Ascending aorta (tissue), 2 donors: ENCODE measurements at regions of chr9 and their contacts with region 1.

Region 1: DNA sequence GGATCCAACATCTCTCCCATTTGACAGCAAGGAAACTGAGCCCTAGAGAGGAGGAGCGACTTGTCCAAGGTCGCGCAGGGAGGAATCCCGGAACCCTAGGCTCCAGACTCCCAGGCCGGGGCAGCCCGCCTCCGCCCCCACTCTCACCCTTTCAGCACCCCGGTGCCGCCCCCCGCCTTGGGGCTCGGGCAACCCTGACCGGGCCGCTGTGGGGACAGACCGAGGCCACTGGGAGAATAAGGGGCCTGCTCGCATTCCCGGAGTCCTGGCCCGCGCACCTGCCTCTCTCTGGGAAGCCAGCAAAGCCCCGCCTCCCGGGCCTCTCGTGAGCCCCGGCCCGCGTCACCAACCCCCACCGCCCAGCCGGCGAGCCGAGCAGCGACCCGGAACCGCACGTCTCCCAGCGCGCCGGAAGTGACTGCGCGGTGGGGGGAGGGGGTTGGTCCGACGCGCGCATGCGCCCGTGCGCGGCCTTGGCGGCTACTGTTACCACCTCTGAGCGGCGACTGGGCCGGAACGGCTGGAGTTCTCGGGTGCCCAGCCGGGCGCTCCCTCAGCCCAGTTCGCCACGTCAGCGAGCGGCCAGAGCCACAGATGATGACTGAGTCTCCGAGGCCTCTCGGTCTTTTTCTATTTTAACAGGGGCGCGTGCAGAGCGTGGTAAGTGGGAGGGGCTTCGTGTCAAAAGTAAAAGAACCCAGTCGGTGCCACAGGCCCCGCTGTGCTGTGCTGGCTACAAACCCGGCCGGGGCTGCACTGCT is at the start of gene GOLGA1:
- DNase-seq: peak; percentile 80 to 98
- H3K4me3 ChIP-seq: peak within 1 kb of the TSS; percentile 68 to 91
- H3K27ac ChIP-seq: peak within 1 kb of the TSS; percentile 92 to 94
- H3K4me1 ChIP-seq: peaks cover 6 to 8% of the 10 kb centered on the region in 2 donors
- H3K27me3 ChIP-seq: no peaks in the 10 kb centered on the region
- CTCF ChIP-seq: no peak
- total RNA-seq, gene GOLGA1: 36.8 TPM

Region 2: DNA sequence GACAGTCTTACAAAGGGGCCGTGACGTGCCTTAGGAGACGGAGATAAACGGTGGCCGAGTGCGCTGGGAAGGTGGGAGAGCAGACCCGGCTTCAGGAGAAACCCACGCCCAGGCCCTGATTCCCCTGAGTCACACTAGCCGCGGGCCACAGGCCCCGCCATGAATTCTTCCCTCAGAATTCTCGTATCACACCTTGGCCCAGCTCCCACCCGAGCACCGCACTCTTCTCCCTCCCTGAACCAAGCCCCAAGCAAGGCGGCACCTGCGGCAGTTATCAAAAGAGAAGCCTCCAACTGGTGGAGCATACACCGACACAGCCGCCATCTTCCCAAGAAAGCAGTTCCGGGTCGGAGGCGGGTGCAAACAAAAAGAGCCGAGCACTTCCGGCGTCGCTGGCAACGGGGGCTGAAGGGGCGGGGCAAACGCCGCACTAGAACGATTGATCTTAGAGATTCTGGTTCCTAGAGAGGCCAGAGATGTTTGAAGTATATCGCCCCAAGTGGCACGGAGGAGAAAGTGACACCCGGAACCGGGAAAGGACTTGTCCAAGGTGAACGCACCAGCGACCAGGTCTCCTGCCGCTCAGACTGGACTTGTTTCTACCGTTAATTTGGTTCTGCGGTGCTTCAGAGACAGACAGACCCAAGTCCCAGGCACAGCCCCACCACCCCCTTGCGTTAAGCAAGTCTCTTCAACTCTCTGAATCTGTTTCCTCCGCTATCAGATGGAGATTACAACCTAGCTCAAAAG is 525.6 kb before region 1 on chr9 and contains the start of gene PSMB7:
- intact Hi-C with region 1: loop called (anchors 10 kb)
- DNase-seq: peak; percentile 80 to 97
- H3K4me3 ChIP-seq: peak within 1 kb of the TSS; percentile 78 to 93
- H3K27ac ChIP-seq: peak within 1 kb of the TSS in 1 of 2 donors; percentile 44
- H3K4me1 ChIP-seq: peaks cover 4 to 10% of the 10 kb centered on the region in 2 donors
- H3K27me3 ChIP-seq: no peaks in the 10 kb centered on the region
- CTCF ChIP-seq: peak; percentile 79 to 87 (median 84)
- total RNA-seq, gene PSMB7: 21.1 TPM

Region 3: DNA sequence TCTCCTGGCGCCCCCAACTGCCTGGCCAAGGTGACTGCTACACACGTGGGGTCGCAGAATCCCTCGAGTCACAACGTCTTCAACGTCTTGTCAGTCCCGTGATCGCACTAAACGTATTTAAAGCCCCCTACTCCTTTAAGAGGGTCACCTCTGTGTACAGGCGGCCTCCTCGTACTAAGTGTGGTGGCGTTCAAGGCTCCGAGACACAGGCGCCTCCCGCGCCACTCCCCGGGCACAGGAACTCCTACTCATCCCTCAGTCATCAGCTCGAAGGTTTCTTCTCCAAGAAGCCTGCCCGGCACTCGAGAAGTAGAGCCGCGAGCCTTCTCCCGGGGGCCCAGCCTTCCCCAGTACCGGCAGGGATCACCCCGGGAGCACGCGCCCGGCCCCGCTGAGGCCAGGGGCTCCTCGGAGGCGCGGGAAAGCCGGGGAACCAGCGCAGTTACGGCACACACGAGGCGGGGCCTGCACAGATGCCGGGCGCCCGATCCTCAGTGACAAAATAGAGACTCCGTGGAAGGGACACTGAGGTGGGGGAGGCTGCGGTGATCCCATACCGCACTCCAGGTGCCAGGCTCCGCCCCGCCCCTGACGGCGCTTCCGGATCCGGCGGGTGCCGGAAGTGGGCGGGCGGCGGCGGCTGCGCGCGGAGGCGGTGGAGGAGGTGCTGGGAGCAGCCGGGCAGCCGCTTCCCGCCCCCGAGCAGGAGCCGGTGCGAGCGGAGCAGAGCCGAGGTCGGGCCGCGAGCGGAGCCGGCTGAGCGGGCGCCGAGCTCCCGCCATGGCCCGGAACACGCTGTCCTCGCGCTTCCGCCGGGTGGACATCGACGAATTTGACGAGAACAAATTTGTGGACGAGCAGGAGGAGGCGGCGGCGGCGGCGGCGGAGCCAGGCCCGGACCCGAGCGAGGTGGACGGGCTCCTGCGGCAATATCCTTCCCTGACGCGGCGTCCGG is 72.1 kb before region 1 on chr9:
- intact Hi-C with region 1: loop called (anchors 2 kb)
- DNase-seq: peak; percentile 30 to 92
- H3K4me3 ChIP-seq: peak overlapping the region; percentile 63 to 84
- H3K27ac ChIP-seq: peak overlapping the region; percentile 89 to 96
- H3K4me1 ChIP-seq: peaks cover 8 to 31% of the 10 kb centered on the region in 2 donors
- H3K27me3 ChIP-seq: no peaks in the 10 kb centered on the region
- CTCF ChIP-seq: no peak

Region 4: DNA sequence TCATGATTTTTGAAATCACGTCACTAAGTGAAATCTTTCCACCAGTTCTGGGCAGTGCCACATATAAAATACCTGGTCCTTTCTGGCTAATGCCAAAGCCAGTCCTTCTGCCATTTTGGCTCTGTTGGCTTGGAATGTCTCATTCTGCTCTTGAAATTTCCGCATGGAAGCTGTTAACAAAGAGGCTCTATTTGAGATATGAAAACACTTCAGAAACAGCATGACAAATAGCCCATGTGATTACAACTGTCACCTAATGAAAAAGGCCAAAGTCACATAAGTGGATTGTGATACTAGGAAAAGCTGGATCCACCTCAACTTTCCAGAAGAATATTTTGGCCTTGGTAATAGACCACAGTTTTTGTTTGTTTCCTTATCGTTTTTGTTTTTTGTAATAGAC is 12.8 kb before region 1 on chr9:
- intact Hi-C with region 1: no loop called
- DNase-seq: no peak
- H3K4me3 ChIP-seq: no peak overlapping the region
- H3K27ac ChIP-seq: no peak overlapping the region
- H3K4me1 ChIP-seq: no peaks in the 10 kb centered on the region
- H3K27me3 ChIP-seq: no peaks in the 10 kb centered on the region
- CTCF ChIP-seq: no peak

Region 5: GRCh38 chr9:125189361-125190289 is 248.8 kb after region 1 on chr9 and contains the start of gene PPP6C:
- intact Hi-C with region 1: loop called (anchors 1 kb)
- DNase-seq: peak; percentile 80 to 98
- H3K4me3 ChIP-seq: peak within 1 kb of the TSS; percentile 84 to 99
- H3K27ac ChIP-seq: peak within 1 kb of the TSS; percentile 98 to 99
- H3K4me1 ChIP-seq: peaks cover 9 to 44% of the 10 kb centered on the region in 2 donors
- H3K27me3 ChIP-seq: no peaks in the 10 kb centered on the region
- CTCF ChIP-seq: peak; percentile 53 to 68 (median 60)
- total RNA-seq, gene PPP6C: 33.8 TPM

Region 6: DNA sequence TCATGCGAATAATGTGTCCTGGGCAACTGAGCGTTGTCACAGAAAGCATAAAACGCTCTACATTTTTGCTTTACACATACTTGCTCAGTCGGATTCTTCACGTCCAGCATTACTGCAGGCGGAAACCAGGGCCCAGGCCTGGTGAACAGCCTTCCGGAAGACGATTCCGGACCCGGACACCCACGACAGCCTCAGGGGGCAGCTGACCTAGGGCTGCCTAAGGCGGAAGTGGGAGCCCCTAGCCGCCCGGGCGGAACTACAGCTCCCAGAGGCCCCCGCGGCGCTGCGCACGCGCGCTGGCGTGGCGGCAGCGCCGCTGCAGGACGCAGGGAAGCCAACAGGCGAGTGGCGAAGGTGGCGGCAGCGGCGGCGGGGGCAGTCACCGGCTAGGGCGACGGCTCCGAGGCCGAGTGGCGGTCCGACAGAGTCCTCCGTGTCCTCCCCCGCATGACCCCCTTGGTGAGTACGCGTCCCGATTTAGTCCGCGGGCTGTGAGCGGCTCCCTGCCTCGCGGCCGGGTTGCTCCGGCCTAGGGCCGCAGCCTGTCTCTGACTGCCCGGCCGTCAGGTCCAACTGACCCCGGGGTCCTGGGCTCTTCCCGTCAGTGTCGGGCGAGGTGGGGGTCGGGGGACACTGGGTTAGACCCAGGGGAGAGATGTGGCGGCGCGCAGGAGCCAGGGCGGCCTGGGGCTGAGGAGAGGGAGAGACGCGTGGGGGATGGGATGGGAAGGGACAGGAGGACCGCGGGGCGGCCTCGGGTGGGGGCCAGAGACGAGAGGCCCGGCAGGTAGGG is 320.8 kb after region 1 on chr9 and contains the start of gene GAPVD1:
- intact Hi-C with region 1: loop called (anchors 5 kb)
- DNase-seq: peak; percentile 43 to 94
- H3K4me3 ChIP-seq: peak within 1 kb of the TSS; percentile 94 to 99
- H3K27ac ChIP-seq: peak within 1 kb of the TSS; percentile 75 to 78
- H3K4me1 ChIP-seq: peaks cover 0 to 17% of the 10 kb centered on the region in 2 donors
- H3K27me3 ChIP-seq: no peaks in the 10 kb centered on the region
- CTCF ChIP-seq: peak in 2 of 3 experiments; percentile 34 to 45
- total RNA-seq, gene GAPVD1: 18.9 TPM

Region 7: DNA sequence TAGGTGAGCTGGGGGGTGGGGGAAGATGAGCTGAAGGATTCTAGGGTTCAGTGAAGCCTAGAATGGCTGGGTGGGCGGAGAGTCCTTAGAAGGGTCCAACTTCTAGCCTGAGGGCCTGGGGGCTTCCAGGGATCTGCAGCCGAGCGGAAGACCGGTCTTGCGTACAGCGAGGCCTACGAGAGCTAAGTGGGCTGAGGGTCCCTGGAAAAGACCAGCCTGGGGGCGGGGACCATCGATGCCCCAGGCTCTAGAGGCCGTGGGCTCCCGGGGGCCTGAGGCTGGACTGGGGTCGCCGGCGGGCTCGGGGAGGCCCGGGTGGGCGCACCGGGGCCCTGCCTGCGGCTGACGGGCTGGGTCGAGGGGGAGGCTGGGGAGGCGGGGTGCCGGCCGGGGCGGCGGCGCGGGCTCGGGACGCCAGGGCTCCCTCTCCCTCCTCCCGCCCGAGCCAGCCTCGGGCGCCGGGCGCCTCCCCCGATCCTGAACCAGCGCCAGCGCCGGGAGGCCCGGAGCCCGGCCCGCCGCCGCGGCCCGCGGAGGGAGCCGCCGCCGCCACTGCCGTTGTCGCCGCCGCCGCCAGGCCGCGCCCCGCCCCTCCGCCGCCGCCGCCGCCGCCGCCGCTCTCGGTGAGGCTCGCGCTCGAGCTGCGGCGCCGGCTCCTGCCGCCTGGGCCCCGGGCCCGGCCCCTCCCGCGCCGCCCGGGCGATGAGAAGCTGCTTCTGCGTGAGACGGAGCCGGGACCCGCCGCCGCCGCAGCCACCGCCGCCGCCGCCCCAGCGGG is 1385.5 kb after region 1 on chr9 and contains the start of gene MVB12B:
- intact Hi-C with region 1: loop called (anchors 5 kb)
- DNase-seq: no peak
- H3K4me3 ChIP-seq: peak within 1 kb of the TSS; percentile 63 to 79
- H3K27ac ChIP-seq: peak within 1 kb of the TSS; percentile 68 to 82
- H3K4me1 ChIP-seq: no peaks in the 10 kb centered on the region
- H3K27me3 ChIP-seq: no peaks in the 10 kb centered on the region
- CTCF ChIP-seq: no peak
- total RNA-seq, gene MVB12B: 9.4 TPM